ENCODE measurements at regions of chr6 and their contacts with region 1.

Region 1: DNA sequence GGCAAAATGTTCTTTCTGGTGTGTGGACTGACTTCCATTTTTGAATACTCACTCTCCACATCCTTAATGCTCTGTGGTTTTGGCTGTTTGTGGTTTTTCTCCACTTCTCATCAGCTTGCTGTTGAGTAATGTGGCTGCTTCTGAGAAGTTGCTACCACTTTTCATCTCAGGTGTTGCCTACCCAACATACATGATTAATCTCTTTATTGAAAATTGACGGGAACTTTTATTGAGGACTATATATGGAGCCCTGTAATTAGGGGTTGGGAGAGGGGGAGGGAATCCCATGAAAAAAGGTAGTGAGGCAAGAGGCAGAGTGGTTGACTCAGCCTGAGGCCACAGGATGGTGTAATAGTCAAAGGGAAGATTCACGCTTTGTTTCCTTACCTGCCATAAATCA is 17.6 kb downstream of the IL22RA2 start:
- DNase-seq: peak; percentile 90
- H3K4me3 Mint-ChIP-seq: peak overlapping the region; percentile 66
- H3K27ac Mint-ChIP-seq: peak overlapping the region; percentile 73
- H3K4me1 Mint-ChIP-seq: peaks cover 24% of the 10 kb centered on the region
- H3K27me3 Mint-ChIP-seq: peaks cover 2% of the 10 kb centered on the region

Region 2: GRCh38 chr6:137033828-137034227 is 122.0 kb before region 1 on chr6:
- intact Hi-C with region 1: loop called (anchors 5 kb)
- DNase-seq: peak; percentile 90
- H3K4me3 Mint-ChIP-seq: peak overlapping the region; percentile 22
- H3K27ac Mint-ChIP-seq: peak overlapping the region; percentile 59
- H3K4me1 Mint-ChIP-seq: peaks cover 10% of the 10 kb centered on the region
- H3K27me3 Mint-ChIP-seq: peaks cover 68% of the 10 kb centered on the region

Region 3: GRCh38 chr6:137102851-137103492 is 52.9 kb before region 1 on chr6:
- intact Hi-C with region 1: loop called (anchors 1 kb)
- DNase-seq: peak; percentile 81
- H3K4me3 Mint-ChIP-seq: peak overlapping the region; percentile 33
- H3K27ac Mint-ChIP-seq: peak overlapping the region; percentile 83
- H3K4me1 Mint-ChIP-seq: peaks cover 38% of the 10 kb centered on the region
- H3K27me3 Mint-ChIP-seq: no peaks in the 10 kb centered on the region

Region 4: DNA sequence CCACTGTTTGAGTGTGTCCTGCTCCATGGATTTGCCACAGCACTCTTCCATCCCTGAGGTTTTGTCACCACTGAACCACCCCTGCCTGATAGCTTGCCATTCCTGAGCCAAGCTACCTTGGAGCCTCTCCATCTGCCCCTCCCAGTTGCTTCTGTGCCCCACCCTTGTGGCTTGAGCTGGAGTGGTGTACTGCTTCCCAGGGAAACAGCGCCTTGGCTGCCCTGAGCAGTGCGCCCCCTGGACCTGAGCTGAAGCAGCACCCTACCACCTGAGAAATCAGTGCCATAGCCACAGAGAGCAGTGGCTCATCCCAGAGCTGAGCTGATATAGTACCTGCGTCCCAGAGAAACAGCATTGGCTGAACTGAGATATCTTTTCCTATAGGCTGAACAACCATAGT is 22.7 kb before region 1 on chr6:
- intact Hi-C with region 1: no loop called
- DNase-seq: no peak
- H3K4me3 Mint-ChIP-seq: no peak overlapping the region
- H3K27ac Mint-ChIP-seq: no peak overlapping the region
- H3K4me1 Mint-ChIP-seq: peaks cover 3% of the 10 kb centered on the region
- H3K27me3 Mint-ChIP-seq: peaks cover 41% of the 10 kb centered on the region

Region 5: DNA sequence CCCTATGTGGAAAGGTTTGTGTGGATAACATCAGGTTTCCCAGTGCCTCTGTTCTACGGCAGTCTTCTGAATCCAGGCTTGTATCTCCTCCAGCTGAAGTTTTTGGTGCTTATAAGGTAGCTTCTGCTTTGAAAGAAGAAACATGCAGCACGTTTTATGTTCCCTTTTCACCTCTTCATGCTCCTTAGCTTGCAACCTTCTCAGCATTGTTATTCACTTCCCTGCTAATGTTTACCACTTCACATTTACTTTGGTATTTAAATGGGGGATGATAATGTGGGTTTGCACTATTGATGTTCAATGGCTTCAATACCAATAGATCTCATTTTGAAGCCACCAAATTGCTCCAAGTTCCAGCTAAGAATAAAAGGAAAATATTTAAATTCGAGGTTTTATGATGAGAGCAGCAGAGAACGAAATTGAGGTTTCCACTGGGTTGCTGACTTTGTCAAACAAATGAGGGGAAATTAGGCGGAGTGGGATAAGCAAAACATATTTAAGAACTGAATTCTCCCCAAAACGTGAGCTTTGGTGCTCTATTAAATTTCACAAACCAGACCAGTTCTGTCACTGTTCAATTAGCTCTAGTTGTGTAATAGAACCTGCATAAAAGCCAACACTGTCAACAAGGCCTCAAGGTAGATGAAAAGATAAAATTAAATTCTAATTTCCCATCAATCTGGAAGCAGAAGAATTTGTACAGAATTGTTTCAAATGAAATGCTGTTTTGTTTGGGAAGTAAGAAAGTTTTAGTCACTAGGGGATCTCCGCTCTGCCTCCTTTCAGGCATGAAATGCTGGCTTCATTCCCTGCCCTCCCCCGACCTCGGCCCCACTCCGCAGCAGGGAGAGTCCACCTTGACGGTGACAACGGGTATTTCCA is 16.2 kb after region 1 on chr6:
- intact Hi-C with region 1: no loop called
- DNase-seq: no peak
- H3K4me3 Mint-ChIP-seq: no peak overlapping the region
- H3K27ac Mint-ChIP-seq: no peak overlapping the region
- H3K4me1 Mint-ChIP-seq: peaks cover 14% of the 10 kb centered on the region
- H3K27me3 Mint-ChIP-seq: peaks cover 16% of the 10 kb centered on the region

Region 6: DNA sequence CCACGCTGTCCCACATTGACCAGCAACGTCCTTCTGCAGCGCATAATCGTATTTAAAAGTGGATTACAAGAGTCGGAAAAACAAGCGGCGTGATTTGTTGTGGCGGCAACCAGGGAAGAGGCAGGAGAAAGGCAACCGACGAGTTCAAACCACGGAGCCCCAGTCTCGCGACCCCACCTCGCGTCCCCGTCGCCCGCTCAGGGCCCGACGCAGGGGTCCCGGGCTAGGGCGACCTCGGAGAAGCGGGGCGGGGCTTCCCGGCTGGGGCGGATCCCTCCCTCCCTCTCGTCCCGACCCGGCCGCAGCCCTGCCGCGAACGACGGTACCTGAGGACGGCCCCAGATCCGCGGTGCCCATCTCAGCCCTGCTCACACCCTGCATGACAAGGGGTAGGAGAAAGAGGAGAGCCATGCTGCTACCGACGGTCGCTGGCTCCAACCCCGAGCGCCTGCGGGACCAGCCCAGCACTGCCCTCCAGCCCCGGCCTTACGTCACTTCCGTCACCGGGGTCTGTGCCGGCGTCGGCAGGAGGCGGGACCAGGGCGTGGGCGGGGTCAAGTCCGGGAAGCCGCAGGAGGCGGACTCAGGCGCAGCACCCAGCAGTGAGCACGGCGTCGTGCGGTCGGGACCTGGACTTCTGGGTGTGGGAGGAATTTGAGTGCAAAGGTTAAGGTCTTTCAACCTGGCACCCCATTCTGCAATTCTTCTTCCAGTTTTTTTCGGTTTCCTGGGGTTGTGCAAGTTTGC is 63.3 kb after region 1 on chr6 and contains the start of gene IFNGR1:
- intact Hi-C with region 1: loop called (anchors 1 kb)
- DNase-seq: peak; percentile 99
- H3K4me3 Mint-ChIP-seq: peak within 1 kb of the TSS; percentile 99
- H3K27ac Mint-ChIP-seq: peak within 1 kb of the TSS; percentile 98
- H3K4me1 Mint-ChIP-seq: peaks cover 45% of the 10 kb centered on the region
- H3K27me3 Mint-ChIP-seq: no peaks in the 10 kb centered on the region
- total RNA-seq, gene IFNGR1: 13.9 and 14.4 TPM in 2 replicates

Region 7: DNA sequence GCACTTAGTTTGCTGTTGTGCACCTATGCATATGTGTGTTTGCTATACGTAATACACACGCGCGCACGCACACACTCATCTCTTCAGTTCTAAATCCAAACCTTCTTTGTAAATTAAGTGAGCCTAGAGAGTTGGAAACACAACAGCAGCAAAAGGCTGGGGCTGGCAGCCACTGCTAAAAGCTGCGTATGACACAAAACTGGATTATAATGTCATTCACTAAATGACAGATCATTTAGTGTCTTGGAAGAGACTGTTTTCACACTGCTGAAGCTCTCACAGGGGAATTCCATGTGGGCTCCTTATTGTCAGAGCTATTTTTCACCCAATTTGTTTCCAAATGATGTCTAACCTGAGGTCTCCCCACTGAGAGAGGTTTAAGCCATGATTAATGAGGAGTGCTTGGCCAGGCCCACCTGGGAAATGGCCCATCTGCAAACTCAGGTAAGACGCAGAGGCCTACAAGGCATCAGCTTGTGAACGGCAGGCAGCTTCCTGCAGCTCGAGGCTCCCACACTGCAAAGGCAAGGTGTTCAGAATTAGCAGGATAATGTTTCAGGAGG is 244.1 kb after region 1 on chr6:
- intact Hi-C with region 1: loop called (anchors 10 kb)
- DNase-seq: peak; percentile 61
- H3K4me3 Mint-ChIP-seq: no peak overlapping the region
- H3K27ac Mint-ChIP-seq: no peak overlapping the region
- H3K4me1 Mint-ChIP-seq: peaks cover 6% of the 10 kb centered on the region
- H3K27me3 Mint-ChIP-seq: peaks cover 6% of the 10 kb centered on the region